ENCODE measurements at regions of chr7 and their contacts with region 1.

Region 1: DNA sequence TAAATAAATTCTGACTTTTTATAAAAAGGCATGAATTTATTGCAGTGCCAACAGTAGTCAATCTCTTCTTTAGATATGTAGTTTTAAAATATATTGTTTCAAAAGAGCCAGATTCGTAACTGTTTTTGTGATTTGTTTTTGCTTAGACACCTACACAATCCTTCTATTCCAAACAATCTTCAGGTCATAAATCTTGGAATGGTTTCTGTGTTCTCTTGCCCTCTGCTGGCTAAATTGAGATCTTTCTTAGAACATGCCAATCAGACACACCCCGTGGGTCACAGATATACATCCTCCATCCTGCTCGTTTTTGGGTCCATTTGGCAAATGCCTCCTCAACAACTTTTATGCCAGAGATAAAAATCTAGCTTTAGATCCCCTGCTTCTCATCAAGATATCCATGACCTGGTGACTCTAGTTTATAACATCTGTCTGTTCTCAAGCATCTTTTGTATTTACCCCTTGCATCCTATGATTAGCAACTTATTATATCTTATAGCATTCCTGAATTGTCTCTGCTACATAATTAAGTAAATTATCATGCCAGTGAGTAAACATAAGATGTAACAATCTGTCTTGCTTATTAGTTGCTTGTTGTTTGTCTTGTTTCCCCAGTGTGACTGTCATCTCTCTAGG is 35.3 kb upstream of the IFRD1 start:
- DNase-seq: no peak
- H3K4me3 Mint-ChIP-seq: no peak overlapping the region
- H3K27ac Mint-ChIP-seq: no peak overlapping the region
- H3K4me1 Mint-ChIP-seq: peaks cover 1% of the 10 kb centered on the region
- H3K27me3 Mint-ChIP-seq: peaks cover 11% of the 10 kb centered on the region

Region 2: DNA sequence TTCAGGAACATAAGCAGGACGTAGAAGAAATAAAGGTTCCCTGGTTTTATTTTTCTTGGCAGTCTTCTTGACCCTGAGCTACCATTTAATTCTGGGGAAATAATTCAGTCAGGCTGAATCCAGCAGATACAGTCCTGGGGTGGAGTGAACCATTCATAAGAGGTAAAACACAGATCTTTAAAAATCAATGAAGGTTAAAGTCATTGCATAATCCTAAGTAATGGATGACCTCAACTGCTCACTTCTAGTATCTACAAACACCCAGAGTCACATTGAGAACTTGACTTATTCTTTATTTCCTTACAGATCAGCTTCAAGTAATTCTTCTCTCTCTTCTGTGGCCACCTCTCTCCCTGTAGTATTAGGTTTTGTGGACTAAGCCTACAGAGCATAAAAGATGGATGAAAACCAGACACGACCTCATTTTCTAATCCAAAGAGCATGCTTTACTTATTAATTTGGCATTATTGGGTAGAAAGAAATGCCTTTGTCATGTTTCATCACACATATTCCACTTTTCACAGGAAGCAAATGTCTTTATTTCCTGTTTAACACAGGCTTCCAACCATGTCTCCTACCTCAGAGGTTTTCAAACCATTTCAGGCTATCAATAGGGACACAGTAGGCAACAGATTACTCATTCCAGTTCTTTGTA is 670.3 kb before region 1 on chr7:
- intact Hi-C with region 1: loop called (anchors 5 kb)
- DNase-seq: no peak
- H3K4me3 Mint-ChIP-seq: no peak overlapping the region
- H3K27ac Mint-ChIP-seq: no peak overlapping the region
- H3K4me1 Mint-ChIP-seq: no peaks in the 10 kb centered on the region
- H3K27me3 Mint-ChIP-seq: peaks cover 6% of the 10 kb centered on the region

Region 3: DNA sequence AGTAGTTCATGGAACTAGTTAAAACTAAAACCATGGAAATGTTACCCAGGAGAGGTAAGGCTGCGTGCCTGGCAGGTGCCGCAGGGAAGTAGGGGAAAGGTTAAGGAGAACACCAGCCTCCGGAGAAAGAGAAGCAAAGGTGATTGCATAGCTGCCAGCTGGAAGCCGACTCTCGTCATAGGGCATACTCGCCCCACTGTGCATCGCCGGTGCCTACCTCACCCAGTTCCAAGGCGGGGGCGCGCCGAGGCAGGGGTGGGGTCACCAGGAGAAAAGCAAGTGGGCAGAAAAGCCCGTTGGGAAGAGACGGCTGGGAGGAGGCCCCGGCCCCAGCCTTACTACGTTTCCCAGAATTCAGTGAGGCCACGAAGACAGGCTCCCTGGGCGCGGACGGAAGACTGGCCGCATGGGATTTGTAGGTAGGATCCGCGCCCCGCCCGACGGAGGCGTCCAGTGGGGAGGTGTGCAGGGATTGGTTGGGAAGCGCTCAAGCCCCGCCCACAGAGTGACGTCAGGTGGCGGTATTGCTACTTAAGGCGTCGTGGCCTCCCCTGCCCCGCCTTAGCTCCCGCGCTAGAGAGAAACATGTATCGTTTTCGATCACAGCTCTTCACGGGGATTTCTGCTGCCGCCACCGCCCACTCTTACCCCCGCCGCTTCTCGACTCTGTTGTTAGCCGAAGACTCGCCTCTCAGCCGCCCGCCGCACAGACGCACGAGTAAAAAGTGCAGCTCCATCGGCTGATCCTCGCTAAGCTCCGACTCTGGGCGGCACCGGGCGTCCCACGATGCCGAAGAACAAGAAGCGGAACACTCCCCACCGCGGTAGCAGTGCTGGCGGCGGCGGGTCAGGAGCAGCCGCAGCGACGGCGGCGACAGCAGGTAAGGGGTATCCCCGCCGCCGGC is 35.2 kb after region 1 on chr7 and contains the start of gene IFRD1:
- intact Hi-C with region 1: no loop called
- DNase-seq: peak; percentile 96
- H3K4me3 Mint-ChIP-seq: peak within 1 kb of the TSS; percentile 97
- H3K27ac Mint-ChIP-seq: peak within 1 kb of the TSS; percentile 98
- H3K4me1 Mint-ChIP-seq: peaks cover 50% of the 10 kb centered on the region
- H3K27me3 Mint-ChIP-seq: no peaks in the 10 kb centered on the region
- total RNA-seq, gene IFRD1: 49.5 and 51.7 TPM in 2 replicates

Measured in activated T-helper 2 cell treated with anti-CD3 and anti-CD28 coated beads, Interferon-gamma antibody, Interleukin-2, Interleukin-4, amounts not matched to agents 10 μg/mL and 5 μg/mL and 100 μg/mL, durations not matched to agents 14 hours and 24 hours and 36 hours (primary cell).